Caco-2 (cell line): ENCODE measurements at regions of chr10 and their contacts with region 1.

Region 1: DNA sequence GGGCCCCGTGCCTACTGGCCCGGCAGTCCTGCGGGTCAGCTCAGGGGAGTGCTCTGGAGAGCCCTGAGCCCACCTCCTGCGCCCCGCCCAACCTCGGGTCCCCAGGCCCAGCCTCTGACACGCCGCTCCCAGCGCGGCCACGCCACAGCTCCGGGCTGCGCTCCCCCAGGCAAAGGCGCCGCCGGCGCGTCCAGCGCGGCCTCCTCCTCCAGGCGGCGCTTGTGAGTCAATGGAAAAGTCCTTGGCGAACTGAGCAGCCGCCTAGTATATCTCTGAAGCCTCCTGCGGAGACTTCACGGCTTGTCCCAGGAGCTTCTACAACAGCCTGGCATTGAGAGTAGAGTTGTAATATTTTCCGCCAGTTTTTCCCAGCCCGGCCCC is 29.5 kb upstream of the BMS1 start:
- DNase-seq: peak; percentile 86 to 95
- H3K4me3 ChIP-seq: peak overlapping the region; percentile 68
- H3K4me3 Mint-ChIP-seq: peak overlapping the region; percentile 90
- H3K27ac Mint-ChIP-seq: no peak overlapping the region
- H3K4me1 ChIP-seq: peaks cover 6% of the 10 kb centered on the region
- H3K4me1 Mint-ChIP-seq: no peaks in the 10 kb centered on the region
- H3K27me3 ChIP-seq: no peaks in the 10 kb centered on the region
- H3K27me3 Mint-ChIP-seq: peaks cover 12% of the 10 kb centered on the region
- CTCF ChIP-seq: peak; percentile 94 to 96

Region 2: GRCh38 chr10:42552493-42553407 is 200.4 kb before region 1 on chr10:
- CTCF ChIA-PET with region 1: no interaction called
- POLR2A ChIA-PET with region 1: no interaction called
- intact Hi-C with region 1: loop called (anchors 2 kb)
- DNase-seq: peak; percentile 97 to 98
- H3K4me3 ChIP-seq: peak overlapping the region; percentile 89
- H3K4me3 Mint-ChIP-seq: peak overlapping the region; percentile 99
- H3K27ac Mint-ChIP-seq: peak overlapping the region; percentile 89
- H3K4me1 ChIP-seq: peaks cover 5% of the 10 kb centered on the region; the same call in 1 of the 2 replicates
- H3K4me1 Mint-ChIP-seq: no peaks in the 10 kb centered on the region
- H3K27me3 ChIP-seq: no peaks in the 10 kb centered on the region
- H3K27me3 Mint-ChIP-seq: no peaks in the 10 kb centered on the region
- CTCF ChIP-seq: no peak

Region 3: GRCh38 chr10:42574336-42574735 is 178.8 kb before region 1 on chr10:
- CTCF ChIA-PET with region 1: no interaction called
- POLR2A ChIA-PET with region 1: no interaction called
- intact Hi-C with region 1: no loop called
- DNase-seq: no peak
- H3K4me3 ChIP-seq: no peak overlapping the region
- H3K4me3 Mint-ChIP-seq: no peak overlapping the region
- H3K27ac Mint-ChIP-seq: no peak overlapping the region
- H3K4me1 ChIP-seq: no peaks in the 10 kb centered on the region
- H3K4me1 Mint-ChIP-seq: no peaks in the 10 kb centered on the region
- H3K27me3 ChIP-seq: no peaks in the 10 kb centered on the region
- H3K27me3 Mint-ChIP-seq: peaks cover 3% of the 10 kb centered on the region
- CTCF ChIP-seq: no peak

Region 4: GRCh38 chr10:42638055-42638820 is 114.9 kb before region 1 on chr10 and contains the start of gene ZNF33B:
- CTCF ChIA-PET with region 1: interaction called, 6 read pairs
- POLR2A ChIA-PET with region 1: no interaction called
- intact Hi-C with region 1: loop called (anchors 1 kb)
- DNase-seq: peak; percentile 98 to 99
- H3K4me3 ChIP-seq: peak within 1 kb of the TSS; percentile 48
- H3K4me3 Mint-ChIP-seq: peak within 1 kb of the TSS; percentile 87
- H3K27ac Mint-ChIP-seq: peak within 1 kb of the TSS; percentile 91
- H3K4me1 ChIP-seq: peaks cover 27% of the 10 kb centered on the region
- H3K4me1 Mint-ChIP-seq: peaks cover 19% of the 10 kb centered on the region
- H3K27me3 ChIP-seq: no peaks in the 10 kb centered on the region
- H3K27me3 Mint-ChIP-seq: no peaks in the 10 kb centered on the region
- CTCF ChIP-seq: no peak
- total RNA-seq, gene ZNF33B: 43.2 and 43.3 TPM in 2 replicates

Region 5: DNA sequence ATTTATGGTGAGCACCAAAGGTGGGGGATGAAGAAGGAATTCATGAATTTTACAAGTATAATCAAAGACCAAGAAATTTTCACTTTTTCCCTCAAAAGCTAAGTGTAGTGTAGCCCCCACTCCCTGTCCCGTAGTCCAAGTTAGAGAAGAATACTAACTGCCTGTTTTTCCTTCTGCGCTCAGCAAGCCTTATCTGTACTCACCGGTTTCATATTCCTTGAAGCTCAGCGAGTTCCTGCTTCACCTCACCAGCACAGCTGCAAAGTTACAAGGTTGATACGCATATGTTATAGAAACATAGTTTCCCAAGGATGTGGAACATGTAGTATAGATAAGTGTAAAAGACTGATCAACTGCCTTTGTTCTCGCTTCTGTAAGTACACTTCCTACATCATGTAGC is 98.7 kb before region 1 on chr10:
- CTCF ChIA-PET with region 1: no interaction called
- POLR2A ChIA-PET with region 1: no interaction called
- intact Hi-C with region 1: no loop called
- DNase-seq: no peak
- H3K4me3 ChIP-seq: no peak overlapping the region
- H3K4me3 Mint-ChIP-seq: no peak overlapping the region
- H3K27ac Mint-ChIP-seq: peak overlapping the region; percentile 12
- H3K4me1 ChIP-seq: peaks cover 39% of the 10 kb centered on the region
- H3K4me1 Mint-ChIP-seq: peaks cover 41% of the 10 kb centered on the region
- H3K27me3 ChIP-seq: no peaks in the 10 kb centered on the region
- H3K27me3 Mint-ChIP-seq: no peaks in the 10 kb centered on the region
- CTCF ChIP-seq: no peak

Region 6: GRCh38 chr10:42782446-42783180 is 29.5 kb after region 1 on chr10 and contains the start of gene BMS1:
- CTCF ChIA-PET with region 1: interaction called, 20 read pairs
- POLR2A ChIA-PET with region 1: interaction called, 24 read pairs
- intact Hi-C with region 1: loop called (anchors 1 kb)
- DNase-seq: peak; percentile 97
- H3K4me3 ChIP-seq: peak within 1 kb of the TSS; percentile 54
- H3K4me3 Mint-ChIP-seq: peak within 1 kb of the TSS; percentile 90
- H3K27ac Mint-ChIP-seq: peak within 1 kb of the TSS; percentile 96
- H3K4me1 ChIP-seq: no peaks in the 10 kb centered on the region
- H3K4me1 Mint-ChIP-seq: peaks cover 9% of the 10 kb centered on the region
- H3K27me3 ChIP-seq: no peaks in the 10 kb centered on the region
- H3K27me3 Mint-ChIP-seq: peaks cover 1% of the 10 kb centered on the region
- CTCF ChIP-seq: no peak
- total RNA-seq, gene BMS1: 36.3 and 38.2 TPM in 2 replicates

Region 7: DNA sequence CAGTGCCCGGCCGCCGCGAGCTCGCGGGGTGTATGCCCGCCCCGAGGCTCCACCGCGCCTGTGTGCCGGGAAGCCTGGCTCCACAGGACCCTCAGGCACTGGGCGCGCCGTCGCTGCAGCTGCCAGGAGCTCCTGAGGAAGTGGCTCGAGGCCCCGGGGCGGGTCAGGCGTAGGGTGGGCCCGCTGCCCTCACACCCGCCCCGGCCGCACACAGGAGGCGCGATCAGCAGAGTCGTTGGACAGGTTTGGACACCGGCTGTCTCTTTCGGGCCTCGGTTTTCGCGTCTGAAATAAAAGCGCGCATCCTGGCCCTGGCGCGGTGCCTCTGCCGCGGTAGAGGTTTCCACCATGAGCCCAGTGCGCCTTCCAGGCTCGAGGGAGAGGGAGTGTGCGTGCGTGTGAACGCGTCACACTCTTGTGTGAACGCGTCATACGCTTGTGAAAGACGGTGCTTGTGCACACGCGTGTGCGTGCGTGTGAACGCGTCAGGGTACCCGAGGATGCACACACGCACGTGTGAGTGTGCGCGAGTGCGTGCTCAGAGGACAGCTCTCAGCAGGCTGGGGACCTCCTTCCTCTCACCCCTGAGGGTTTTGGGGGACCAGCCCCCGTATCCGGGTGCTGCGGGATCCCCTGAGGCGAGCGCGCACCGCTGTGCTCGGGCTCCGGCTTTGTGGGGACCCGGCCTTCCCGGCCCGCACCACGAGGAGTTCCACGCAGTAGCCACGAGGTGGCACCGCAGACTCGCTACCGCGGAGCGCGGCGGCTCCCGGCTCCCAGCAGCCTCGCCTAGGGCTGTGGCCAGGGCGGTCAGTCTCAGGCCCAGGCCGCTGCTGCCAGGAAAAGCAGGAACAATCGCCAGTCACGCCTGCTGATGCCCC is 113.2 kb after region 1 on chr10:
- CTCF ChIA-PET with region 1: no interaction called
- POLR2A ChIA-PET with region 1: no interaction called
- intact Hi-C with region 1: loop called (anchors 5 kb)
- DNase-seq: peak; percentile 73 to 85
- H3K4me3 ChIP-seq: peak overlapping the region; percentile 16
- H3K4me3 Mint-ChIP-seq: peak overlapping the region; percentile 37
- H3K27ac Mint-ChIP-seq: no peak overlapping the region
- H3K4me1 ChIP-seq: no peaks in the 10 kb centered on the region
- H3K4me1 Mint-ChIP-seq: peaks cover 4% of the 10 kb centered on the region
- H3K27me3 ChIP-seq: 0 out of 2 replicates have a peak, but pooled peaks cover 2% of the 10 kb centered on the region
- H3K27me3 Mint-ChIP-seq: peaks cover 29% of the 10 kb centered on the region
- CTCF ChIP-seq: peak; percentile 73 to 79

Region 8: DNA sequence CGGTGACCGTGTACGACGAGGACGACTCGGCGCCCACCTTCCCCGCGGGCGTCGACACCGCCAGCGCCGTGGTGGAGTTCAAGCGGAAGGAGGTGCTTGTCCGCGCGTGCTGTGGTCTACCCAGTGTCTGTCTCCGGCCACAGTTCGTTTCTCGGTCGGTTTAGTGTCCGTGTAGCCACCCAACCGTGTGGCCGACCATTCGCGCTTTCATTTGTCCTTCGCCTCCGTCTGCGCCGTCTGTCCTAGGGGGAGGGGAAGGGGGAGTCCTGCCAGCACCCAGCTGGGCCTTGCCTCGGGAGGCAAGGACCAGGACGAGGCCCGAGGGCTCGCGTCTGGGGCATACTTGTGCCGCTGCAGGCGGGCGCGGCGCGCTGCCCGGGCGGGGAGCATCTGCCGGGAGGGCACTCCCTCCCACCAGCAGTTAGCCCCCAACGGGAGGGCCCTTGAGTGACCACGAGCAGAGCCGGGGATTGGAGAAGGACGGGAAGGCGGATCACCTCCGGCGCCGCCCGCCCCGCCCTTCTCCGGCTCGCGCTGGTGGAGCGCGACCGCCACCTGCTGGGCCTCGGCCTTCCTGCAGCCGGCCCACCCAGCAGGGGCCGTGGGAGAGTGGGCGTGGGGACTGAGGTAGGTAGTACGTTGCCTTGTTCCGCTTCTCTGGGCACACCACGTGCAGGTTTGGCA is 352.1 kb after region 1 on chr10:
- CTCF ChIA-PET with region 1: no interaction called
- POLR2A ChIA-PET with region 1: no interaction called
- intact Hi-C with region 1: loop called (anchors 1 kb)
- DNase-seq: peak; percentile 80 to 91
- H3K4me3 ChIP-seq: peak overlapping the region; percentile 48
- H3K4me3 Mint-ChIP-seq: peak overlapping the region; percentile 68
- H3K27ac Mint-ChIP-seq: no peak overlapping the region
- H3K4me1 ChIP-seq: no peaks in the 10 kb centered on the region
- H3K4me1 Mint-ChIP-seq: no peaks in the 10 kb centered on the region
- H3K27me3 ChIP-seq: peaks cover 3% of the 10 kb centered on the region
- H3K27me3 Mint-ChIP-seq: peaks cover 18% of the 10 kb centered on the region
- CTCF ChIP-seq: peak; percentile 99